ENCODE measurements at regions of chr19 and their contacts with region 1.

Region 1: DNA sequence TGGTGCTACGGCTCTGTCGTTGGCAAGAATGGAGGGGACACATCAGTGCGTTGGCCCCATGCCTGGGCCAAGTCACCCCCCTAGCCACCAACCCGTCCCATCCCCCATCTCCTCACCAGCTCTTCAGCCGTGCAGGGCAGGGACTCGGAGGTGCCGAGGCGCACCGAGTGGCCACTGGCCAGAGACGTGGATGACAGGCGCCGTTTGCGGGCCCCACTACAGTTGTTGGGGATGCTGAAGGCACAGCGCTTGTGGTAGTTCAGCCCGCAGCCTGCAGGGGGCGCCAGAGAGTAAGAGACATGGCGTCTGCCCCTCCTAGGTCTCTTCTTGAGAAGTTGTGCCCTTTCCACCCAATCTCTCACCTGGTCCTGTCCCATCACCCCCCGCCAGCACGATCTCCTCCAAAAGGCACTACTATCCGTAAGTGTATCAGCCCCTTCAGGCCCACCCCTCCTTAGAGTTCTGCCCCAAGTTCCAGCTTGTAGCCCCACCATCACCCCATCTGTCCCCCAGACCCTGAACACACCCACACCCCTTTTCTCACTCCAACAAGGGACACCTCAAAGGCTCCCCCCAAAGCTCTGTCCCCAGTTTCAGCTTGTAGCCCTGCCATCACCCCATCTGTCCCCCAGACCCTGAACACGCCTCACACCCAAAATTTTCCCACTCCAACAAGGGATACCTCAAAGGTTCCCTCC is 12.4 kb downstream of the PRKD2 start:
- DNase-seq: peak; percentile 33
- H3K27ac ChIP-seq: no peak overlapping the region
- CTCF ChIP-seq: peak; percentile 85

Region 2: GRCh38 chr19:46608964-46609345 is 95.6 kb before region 1 on chr19:
- CTCF ChIA-PET with region 1: no interaction called
- POLR2A ChIA-PET with region 1: no interaction called
- DNase-seq: no peak
- H3K27ac ChIP-seq: peak overlapping the region; percentile 17; the same call in 1 of the 2 replicates
- CTCF ChIP-seq: no peak

Region 3: GRCh38 chr19:46674416-46675183 is 29.9 kb before region 1 on chr19:
- CTCF ChIA-PET with region 1: interaction called, 10 read pairs
- POLR2A ChIA-PET with region 1: no interaction called
- DNase-seq: peak; percentile 65
- H3K27ac ChIP-seq: no peak overlapping the region
- CTCF ChIP-seq: no peak

Measured in RWPE1 (cell line).